ENCODE measurements at regions of chr5 and their contacts with region 1.

Region 1: DNA sequence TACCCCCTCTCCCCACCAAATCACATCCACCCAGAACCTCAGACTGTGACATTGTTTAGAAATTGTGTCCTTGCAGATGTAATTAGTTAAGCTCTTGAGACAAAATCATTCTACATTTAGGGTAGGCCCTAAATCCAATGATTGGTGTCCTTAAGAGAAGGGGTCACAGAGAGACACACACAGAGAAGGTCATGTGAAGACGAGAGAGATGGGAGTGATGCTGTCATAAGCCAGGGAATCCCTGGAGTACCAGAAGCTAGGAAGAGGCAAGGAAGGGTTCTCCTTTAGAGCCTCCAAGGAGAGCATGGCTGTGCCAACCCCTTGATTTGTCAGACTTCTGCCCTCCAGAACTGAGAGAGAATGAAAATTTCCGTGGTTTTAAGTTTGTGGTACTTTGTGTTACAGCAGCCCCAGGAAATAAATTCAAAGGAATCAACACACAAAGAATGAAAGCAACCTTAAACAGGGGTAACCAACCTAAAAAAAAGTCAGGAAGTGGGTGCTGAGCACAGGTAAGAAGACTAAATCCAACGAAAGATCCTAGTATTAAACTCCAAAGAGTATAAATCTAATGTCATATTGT is 33.6 kb downstream of the TIMD4 start:
- DNase-seq: peak; percentile 28
- H3K4me3 Mint-ChIP-seq: no peak overlapping the region
- H3K27ac Mint-ChIP-seq: peak overlapping the region; percentile 86
- H3K4me1 Mint-ChIP-seq: peaks cover 90% of the 10 kb centered on the region
- H3K27me3 Mint-ChIP-seq: no peaks in the 10 kb centered on the region

Region 2: GRCh38 chr5:156444753-156445291 is 484.6 kb before region 1 on chr5:
- CTCF ChIA-PET with region 1: no interaction called
- DNase-seq: no peak
- H3K4me3 Mint-ChIP-seq: no peak overlapping the region
- H3K27ac Mint-ChIP-seq: no peak overlapping the region
- H3K4me1 Mint-ChIP-seq: no peaks in the 10 kb centered on the region
- H3K27me3 Mint-ChIP-seq: peaks cover 15% of the 10 kb centered on the region

Region 3: DNA sequence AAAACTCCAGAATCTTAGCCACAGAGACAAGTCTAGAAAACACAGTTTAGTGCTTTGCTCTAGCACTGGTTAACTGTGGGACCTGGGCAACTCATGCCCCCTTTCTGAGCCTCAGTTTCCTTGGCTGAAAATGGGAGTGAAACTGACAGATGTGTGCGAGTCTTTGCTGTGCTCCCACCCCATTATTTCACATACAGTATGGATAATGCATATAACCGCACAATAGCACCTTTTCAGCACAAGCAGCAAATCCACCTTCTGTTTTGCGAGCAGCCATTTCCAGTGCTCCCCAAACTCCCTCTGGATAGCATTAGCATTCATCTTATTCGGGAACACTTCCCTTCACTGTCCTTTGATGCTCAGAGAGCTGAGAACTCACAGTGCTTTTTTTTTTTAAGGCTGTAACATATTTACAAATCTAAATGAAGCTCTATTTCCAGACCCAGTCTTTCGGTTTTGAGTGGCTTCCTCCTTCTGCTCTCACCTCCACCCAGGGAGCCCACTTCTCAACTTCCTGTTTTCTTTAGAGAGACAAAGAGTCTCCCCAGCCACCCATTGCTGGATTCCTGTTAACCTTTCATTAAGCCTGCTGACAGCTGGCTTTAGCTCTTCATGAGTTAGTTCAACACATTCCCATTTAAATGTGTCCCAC is 15.6 kb before region 1 on chr5:
- CTCF ChIA-PET with region 1: interaction called, 13 read pairs
- DNase-seq: peak; percentile 61
- H3K4me3 Mint-ChIP-seq: peak overlapping the region; percentile 56
- H3K27ac Mint-ChIP-seq: peak overlapping the region; percentile 99
- H3K4me1 Mint-ChIP-seq: peaks cover 71% of the 10 kb centered on the region
- H3K27me3 Mint-ChIP-seq: no peaks in the 10 kb centered on the region

Measured in activated naive CD4-positive, alpha-beta T cell treated with anti-CD3 and anti-CD28 coated beads, Interleukin-2, amount 10 ng/mL, durations not matched to agents 7 days and 5 days (primary cell).